ENCODE measurements at regions of chr10 and their contacts with region 1.

Region 1: DNA sequence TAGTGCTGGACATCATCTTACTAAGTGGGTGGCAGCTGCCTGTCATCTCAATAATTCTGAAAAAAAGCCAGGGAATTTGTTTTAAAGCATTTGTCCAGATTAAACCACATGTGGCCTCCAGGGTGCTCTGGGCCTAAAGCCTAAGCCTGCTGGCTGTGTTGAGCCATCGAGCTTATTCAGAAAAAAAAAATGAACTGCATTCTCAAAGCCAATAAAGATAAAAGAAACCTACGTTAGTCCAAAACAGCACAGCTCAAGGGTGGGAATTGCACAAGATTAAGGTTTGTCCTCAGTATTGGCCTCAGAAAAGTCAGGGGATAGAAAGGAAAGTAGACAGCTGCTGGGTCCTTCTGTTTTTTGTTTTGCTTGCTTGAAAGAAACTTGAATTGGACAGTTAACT is 22.6 kb upstream of the PRTFDC1 start:
- DNase-seq: peak; percentile 67
- H3K4me3 Mint-ChIP-seq: no peak overlapping the region
- H3K27ac Mint-ChIP-seq: peak overlapping the region; percentile 5
- H3K4me1 Mint-ChIP-seq: peaks cover 11% of the 10 kb centered on the region
- H3K27me3 Mint-ChIP-seq: no peaks in the 10 kb centered on the region
- CTCF ChIP-seq: no peak

Region 2: DNA sequence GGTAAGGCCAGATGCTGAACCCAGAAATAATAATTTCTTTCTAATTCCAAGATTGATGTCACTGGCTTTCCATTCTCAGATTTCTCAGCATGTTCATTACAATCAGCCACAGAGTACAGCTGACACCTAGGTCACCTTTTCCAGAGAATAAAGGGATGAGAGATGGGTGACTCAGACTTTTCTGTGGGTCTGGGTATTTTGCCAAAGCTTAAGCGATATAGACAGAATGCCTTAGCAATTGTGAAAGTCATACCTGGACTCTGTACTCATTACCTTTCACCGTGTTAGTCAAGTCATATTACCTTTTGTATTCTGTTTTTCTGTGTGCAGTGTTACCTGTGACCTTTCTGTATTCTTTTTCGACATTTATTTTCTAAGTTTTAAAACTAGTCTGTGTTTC is 12.0 kb before region 1 on chr10:
- CTCF ChIA-PET with region 1: interaction called, 4 read pairs
- POLR2A ChIA-PET with region 1: interaction called, 14 read pairs
- intact Hi-C with region 1: no loop called
- DNase-seq: peak; percentile 91
- H3K4me3 Mint-ChIP-seq: no peak overlapping the region
- H3K27ac Mint-ChIP-seq: no peak overlapping the region
- H3K4me1 Mint-ChIP-seq: peaks cover 13% of the 10 kb centered on the region
- H3K27me3 Mint-ChIP-seq: no peaks in the 10 kb centered on the region
- CTCF ChIP-seq: no peak

Region 3: DNA sequence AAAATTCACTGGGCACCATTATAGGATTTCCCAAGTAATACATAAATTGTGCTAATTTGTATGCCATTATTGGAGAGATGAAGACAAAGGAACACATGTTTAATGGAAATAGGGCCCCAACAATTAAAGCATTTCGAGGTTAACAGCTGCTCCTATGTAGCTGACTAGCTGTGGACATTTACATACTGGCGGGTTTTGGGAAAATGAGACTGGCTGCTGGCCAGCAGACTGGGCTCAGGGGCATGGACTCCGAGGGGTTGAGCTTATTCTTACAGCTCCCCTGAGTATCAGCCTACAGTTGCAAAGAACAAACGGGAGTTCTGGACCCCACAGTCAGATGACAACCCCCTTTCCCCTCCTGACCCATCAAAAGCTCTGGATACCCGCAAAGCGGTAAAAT is 867.2 kb after region 1 on chr10:
- CTCF ChIA-PET with region 1: no interaction called
- POLR2A ChIA-PET with region 1: no interaction called
- intact Hi-C with region 1: no loop called
- DNase-seq: no peak
- H3K4me3 Mint-ChIP-seq: no peak overlapping the region
- H3K27ac Mint-ChIP-seq: no peak overlapping the region
- H3K4me1 Mint-ChIP-seq: no peaks in the 10 kb centered on the region
- H3K27me3 Mint-ChIP-seq: peaks cover 64% of the 10 kb centered on the region
- CTCF ChIP-seq: no peak